ENCODE measurements at regions of chr7 and their contacts with region 1.

Region 1: DNA sequence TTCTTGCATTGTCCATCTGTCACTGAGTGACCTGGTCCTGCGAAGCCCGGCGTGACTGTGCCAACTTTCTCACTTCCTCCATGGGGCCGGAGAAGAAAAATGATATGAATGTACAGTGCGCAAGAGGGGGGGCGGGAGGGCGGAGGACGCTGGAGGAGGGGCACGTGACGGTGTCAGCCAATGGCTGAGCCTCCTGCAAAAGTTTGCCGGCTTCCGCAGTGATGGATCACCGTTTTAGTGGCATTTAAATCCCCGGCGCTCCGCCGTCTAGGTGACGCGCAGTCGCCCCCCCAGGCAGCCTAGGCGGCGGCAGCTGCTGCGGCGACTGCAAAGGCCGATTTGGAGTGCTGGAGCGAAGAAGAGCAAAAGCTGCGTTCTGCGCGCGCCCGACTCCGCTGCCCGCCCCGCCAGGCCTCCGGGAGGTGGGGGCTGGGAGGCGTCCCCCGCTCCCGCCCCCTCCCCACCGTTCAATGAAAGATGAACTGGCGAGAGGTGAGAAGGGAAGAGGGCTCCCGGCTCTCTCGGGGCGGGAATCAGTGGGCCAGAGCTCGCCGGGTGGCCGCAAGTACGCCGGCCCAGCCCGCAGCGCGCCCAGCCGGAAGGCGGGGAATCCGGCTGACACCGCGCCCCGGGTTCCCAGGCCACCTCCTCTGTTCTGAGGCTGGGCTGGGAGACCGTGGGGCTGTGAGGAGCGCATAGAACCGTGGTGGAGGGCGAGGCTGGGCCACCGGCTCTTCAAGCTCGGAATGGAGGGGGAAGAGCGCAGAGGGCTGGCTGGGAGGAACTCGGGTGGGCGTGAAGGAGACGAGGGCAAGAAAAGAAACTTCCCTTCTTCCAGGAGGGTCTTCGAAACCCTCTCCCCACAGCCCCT is at the start of gene HOXA1:
- DNase-seq: peak; percentile 63 to 87
- H3K4me3 ChIP-seq: peak within 1 kb of the TSS; percentile 83 to 99 (median 84)
- H3K27ac ChIP-seq: peak within 1 kb of the TSS; percentile 98 to 99
- H3K4me1 ChIP-seq: peaks cover 0 to 3% of the 10 kb centered on the region in 2 donors
- H3K27me3 ChIP-seq: no peaks in the 10 kb centered on the region
- CTCF ChIP-seq: no peak
- POLR2A ChIP-seq: peak; percentile 56
- total RNA-seq, gene HOXA1: 0.33 to 0.80 (median 0.44) TPM

Region 2: GRCh38 chr7:27143023-27143949 is 47.2 kb after region 1 on chr7 and contains the start of gene HOXA5:
- intact Hi-C with region 1: loop called (anchors 5 kb)
- DNase-seq: peak in 1 of 2 donors; percentile 94
- H3K4me3 ChIP-seq: peak within 1 kb of the TSS; percentile 57 to 80 (median 75)
- H3K27ac ChIP-seq: peak within 1 kb of the TSS; percentile 95 to 96
- H3K4me1 ChIP-seq: peaks cover 0 to 4% of the 10 kb centered on the region in 2 donors
- H3K27me3 ChIP-seq: peaks cover 0 to 21% of the 10 kb centered on the region in 2 donors
- CTCF ChIP-seq: peak; percentile 87 to 92 (median 89)
- POLR2A ChIP-seq: peak; percentile 66
- total RNA-seq, gene HOXA5: 11.5 to 48.7 (median 22.6) TPM

Region 3: GRCh38 chr7:27709137-27710075 is 613.3 kb after region 1 on chr7:
- intact Hi-C with region 1: loop called (anchors 5 kb)
- DNase-seq: no peak
- H3K4me3 ChIP-seq: no peak overlapping the region
- H3K27ac ChIP-seq: no peak overlapping the region
- H3K4me1 ChIP-seq: no peaks in the 10 kb centered on the region
- H3K27me3 ChIP-seq: no peaks in the 10 kb centered on the region
- CTCF ChIP-seq: no peak
- POLR2A ChIP-seq: no peak